ENCODE measurements at regions of chr6 and their contacts with region 1.

Region 1: DNA sequence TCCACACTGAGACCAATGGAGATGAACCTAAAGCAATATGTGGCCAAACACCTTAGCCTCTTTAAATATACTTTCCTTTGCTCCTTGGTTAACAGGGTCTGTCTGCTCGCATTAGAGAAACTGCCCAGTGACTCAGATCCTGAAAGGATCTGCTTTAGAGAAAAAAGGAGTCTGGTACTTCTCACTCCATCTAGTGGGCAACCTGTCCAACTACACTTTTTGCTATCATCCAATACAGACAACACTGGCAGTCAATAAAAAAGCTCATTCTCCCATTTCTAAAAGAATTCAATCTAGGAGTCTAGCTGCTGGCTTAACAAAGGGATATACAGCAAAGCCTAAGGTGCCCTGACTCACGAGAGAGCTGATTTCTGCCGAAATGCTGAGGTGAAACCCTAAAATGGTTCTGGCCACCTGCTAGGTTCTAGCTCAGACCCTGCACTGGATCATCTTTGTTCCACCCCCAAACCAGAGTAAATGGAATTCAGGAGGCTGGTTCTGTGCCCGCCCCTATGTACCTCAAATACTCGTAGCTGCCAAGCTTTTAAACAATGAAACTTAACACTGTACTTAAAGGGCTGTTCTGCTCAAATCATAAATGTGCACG is 11.5 kb downstream of the GNL1 start:
- DNase-seq: peak in 1 of 2 experiments; percentile 71
- H3K4me3 ChIP-seq: no peak overlapping the region
- H3K4me1 ChIP-seq: no peaks in the 10 kb centered on the region; the same call in 1 of the 2 replicates
- H3K27me3 ChIP-seq: 0 out of 2 replicates have a peak, but pooled peaks cover 3% of the 10 kb centered on the region

Region 2: GRCh38 chr6:30483677-30484279 is 61.0 kb before region 1 on chr6:
- in situ Hi-C with region 1: loop called (anchors 5 kb)
- DNase-seq: peak; percentile 44 to 59
- H3K4me3 ChIP-seq: no peak overlapping the region
- H3K4me1 ChIP-seq: peaks cover 4% of the 10 kb centered on the region
- H3K27me3 ChIP-seq: peaks cover 31% of the 10 kb centered on the region

Measured in HAP-1 (cell line).